K562 (cell line): ENCODE measurements at regions of chrX and their contacts with region 1.

Region 1: DNA sequence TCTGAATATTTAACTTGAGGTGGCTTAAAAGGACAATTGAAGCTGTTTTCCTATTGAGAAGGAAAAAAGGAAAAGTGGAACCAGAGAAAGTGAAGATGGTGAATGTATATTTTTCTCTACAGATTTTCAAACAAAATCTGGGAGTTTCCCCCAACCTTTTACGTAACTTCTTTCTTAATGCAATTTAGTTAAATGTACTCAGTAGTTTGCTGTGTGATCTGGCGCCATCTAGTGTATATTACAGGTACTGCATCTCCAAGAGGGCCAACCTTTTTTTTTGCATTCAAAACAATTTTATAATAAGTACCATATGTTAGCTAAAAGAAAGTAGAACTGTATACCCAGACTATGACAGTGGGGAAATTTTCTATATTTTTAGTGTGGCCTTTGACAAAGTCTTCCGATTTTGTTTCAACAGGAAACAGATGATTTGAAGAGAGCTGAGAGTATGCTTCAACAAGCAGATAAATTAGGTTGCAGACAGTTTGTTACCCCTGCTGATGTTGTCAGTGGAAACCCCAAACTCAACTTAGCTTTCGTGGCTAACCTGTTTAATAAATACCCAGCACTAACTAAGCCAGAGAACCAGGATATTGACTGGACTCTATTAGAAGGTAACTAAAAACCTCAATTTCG is 82.0 kb downstream of the PLS3 start:
- DNase-seq: peak; percentile 14 to 53 (median 35)
- ATAC-seq: no peak
- H3K4me3 ChIP-seq: no peak overlapping the region
- H3K27ac ChIP-seq: no peak overlapping the region
- H3K4me1 ChIP-seq: no peaks in the 10 kb centered on the region
- H3K27me3 ChIP-seq: no peaks in the 10 kb centered on the region
- CTCF ChIP-seq: peak; percentile 24 to 81 (median 62); a peak in 5 of 6 replicates
- EP300 ChIP-seq: no peak
- POLR2A ChIP-seq: no peak
- RAD21 ChIP-seq: peak; percentile 52 to 71

Region 2: DNA sequence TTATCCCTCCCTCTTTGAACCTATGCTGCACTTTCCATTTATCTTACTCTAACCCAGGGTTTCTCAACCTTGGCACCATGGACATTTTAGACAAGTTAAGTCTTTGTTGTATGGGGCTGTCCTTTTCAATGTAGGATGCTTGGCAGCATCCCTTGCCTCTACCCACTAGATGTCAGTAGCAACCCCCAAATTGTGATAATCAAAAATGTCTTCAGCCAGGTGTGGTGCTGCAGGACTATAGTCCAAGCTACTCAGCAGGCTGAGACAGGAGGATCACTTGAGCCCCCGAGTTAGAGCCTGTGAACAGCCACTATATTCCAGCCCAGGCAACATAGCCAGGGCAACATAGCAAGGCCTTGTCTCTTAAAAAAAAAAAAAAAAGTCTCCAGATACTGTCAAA is 416.1 kb before region 1 on chrX:
- CTCF ChIA-PET with region 1: no interaction called
- POLR2A ChIA-PET with region 1: no interaction called
- in situ Hi-C with region 1: no loop called
- intact Hi-C with region 1: loop called (anchors 10 kb)
- DNase-seq: peak in 1 of 4 experiments; percentile 15
- ATAC-seq: peak; percentile 73; the same call in 2 of the 3 replicates
- H3K4me3 ChIP-seq: no peak overlapping the region
- H3K27ac ChIP-seq: no peak overlapping the region
- H3K4me1 ChIP-seq: no peaks in the 10 kb centered on the region
- H3K27me3 ChIP-seq: no peaks in the 10 kb centered on the region
- CTCF ChIP-seq: peak; percentile 36 to 86 (median 59); a peak in 4 of 6 replicates
- EP300 ChIP-seq: no peak
- POLR2A ChIP-seq: no peak
- RAD21 ChIP-seq: peak in 1 of 2 experiments; percentile 35; a peak in 2 of 4 replicates

Region 3: GRCh38 chrX:115330498-115331168 is 312.4 kb before region 1 on chrX:
- CTCF ChIA-PET with region 1: interaction called, 9 read pairs
- POLR2A ChIA-PET with region 1: no interaction called
- in situ Hi-C with region 1: no loop called
- intact Hi-C with region 1: loop called (anchors 1 kb)
- DNase-seq: peak; percentile 41 to 61 (median 55)
- ATAC-seq: peak; percentile 80
- H3K4me3 ChIP-seq: no peak overlapping the region
- H3K27ac ChIP-seq: no peak overlapping the region
- H3K4me1 ChIP-seq: no peaks in the 10 kb centered on the region
- H3K27me3 ChIP-seq: no peaks in the 10 kb centered on the region; a peak in 1 of 5 replicates
- CTCF ChIP-seq: peak; percentile 58 to 70 (median 65)
- EP300 ChIP-seq: no peak
- POLR2A ChIP-seq: no peak
- RAD21 ChIP-seq: peak; percentile 66 to 67

Region 4: DNA sequence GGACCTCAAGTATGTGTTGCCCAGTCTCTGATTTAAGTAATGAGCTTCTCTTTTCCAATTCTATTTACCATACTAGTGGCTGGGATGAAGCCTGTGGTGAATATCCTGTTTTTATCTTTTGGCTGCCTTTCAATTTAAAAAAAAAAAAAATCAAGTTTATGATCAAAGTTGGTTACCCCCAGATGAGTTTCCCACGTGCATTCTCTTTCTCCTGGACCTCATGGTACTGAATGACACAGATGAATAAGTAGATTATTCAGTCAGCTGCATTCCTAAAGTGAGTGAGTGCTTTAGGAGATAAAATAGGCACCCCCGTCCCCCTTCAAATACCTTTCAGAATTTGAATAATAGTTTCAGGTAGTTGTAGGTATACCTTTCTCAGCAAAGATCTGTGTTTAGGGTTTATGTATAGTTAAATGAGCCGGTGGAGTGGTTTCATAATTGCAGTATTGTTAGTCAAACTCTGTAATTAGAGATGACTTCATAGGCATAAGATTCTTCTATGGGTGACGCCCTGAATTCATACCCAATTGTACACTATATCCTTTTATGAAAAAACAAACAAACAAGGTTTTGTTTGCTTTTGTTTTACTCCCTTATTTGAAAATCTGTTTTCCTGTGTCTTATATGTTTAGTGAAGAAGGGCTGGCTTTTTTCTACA is 40.2 kb before region 1 on chrX:
- CTCF ChIA-PET with region 1: no interaction called
- POLR2A ChIA-PET with region 1: no interaction called
- in situ Hi-C with region 1: no loop called
- intact Hi-C with region 1: no loop called
- DNase-seq: no peak
- ATAC-seq: no peak
- H3K4me3 ChIP-seq: no peak overlapping the region
- H3K27ac ChIP-seq: no peak overlapping the region
- H3K4me1 ChIP-seq: no peaks in the 10 kb centered on the region
- H3K27me3 ChIP-seq: no peaks in the 10 kb centered on the region
- CTCF ChIP-seq: no peak
- EP300 ChIP-seq: no peak
- POLR2A ChIP-seq: no peak
- RAD21 ChIP-seq: no peak